A673 (cell line): ENCODE measurements at regions of chr1 and their contacts with region 1.

Region 1: DNA sequence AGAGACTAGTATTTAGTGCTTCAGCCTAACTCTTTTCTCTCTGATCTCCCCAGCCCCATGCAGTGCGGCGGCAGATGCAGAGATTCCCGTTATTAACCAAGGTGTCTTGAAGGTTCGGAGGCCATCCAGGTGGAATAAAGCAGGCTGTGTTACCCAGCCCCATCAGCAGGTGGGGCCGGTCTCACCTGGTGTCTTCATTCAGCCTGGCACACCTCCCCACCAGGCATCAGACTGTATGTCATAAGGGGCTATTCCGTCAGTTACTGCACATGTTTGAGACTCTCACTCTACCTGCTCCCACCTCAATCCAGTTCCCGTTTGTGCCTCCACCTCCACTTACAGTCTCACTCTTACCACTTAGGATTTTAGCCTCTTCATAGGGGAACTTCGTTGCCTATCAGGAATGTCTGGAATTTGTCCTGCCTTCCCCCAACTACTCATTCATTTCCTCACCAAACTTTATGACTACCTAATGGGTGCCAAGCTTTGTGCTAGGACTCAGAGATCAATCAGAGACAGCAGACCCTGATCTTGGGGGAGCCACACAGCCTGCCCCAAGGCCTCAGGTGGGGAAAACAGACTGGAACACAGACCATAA is 170.2 kb downstream of the PLPP3 start:
- DNase-seq: no peak
- H3K4me3 ChIP-seq: no peak overlapping the region
- H3K27ac ChIP-seq: no peak overlapping the region
- H3K4me1 ChIP-seq: no peaks in the 10 kb centered on the region
- H3K27me3 ChIP-seq: peaks cover 5% of the 10 kb centered on the region
- CTCF ChIP-seq: 0 out of 2 replicates have a peak, but pooled peaks have one; percentile 12

Region 2: DNA sequence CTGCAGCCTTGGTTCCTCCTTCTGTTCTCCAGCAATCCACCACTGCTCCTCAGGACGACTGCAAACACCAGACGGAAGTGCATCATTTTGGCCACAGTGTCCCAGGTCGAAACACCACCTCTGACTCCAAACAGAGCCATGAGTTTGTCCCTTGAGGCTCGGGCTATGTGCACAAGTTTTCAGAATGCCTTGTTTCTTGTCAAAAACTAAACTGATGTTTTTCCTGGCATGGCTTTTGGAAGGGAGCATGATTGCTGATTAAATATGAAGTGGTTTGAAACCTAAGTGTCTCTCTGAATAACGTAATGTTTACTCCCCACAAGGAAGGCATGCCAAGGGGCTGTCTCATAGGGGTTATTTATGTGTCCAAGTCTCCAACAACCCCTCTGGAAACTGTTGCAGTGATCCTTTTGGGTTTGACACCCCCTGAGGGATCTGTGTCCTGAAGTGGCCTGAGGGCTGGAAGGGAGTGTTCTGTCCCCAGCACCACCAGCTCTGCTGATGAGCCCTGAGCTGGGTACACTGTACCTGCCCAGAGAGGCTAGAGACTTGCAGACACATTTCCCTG is 37.4 kb after region 1 on chr1:
- CTCF ChIA-PET with region 1: no interaction called
- POLR2A ChIA-PET with region 1: no interaction called
- intact Hi-C with region 1: no loop called
- DNase-seq: no peak
- H3K4me3 ChIP-seq: no peak overlapping the region
- H3K27ac ChIP-seq: no peak overlapping the region
- H3K4me1 ChIP-seq: no peaks in the 10 kb centered on the region
- H3K27me3 ChIP-seq: peaks cover 6% of the 10 kb centered on the region
- CTCF ChIP-seq: no peak

Region 3: GRCh38 chr1:56491441-56491840 is 82.2 kb after region 1 on chr1:
- CTCF ChIA-PET with region 1: no interaction called
- POLR2A ChIA-PET with region 1: no interaction called
- intact Hi-C with region 1: no loop called
- DNase-seq: no peak
- H3K4me3 ChIP-seq: no peak overlapping the region
- H3K27ac ChIP-seq: no peak overlapping the region
- H3K4me1 ChIP-seq: no peaks in the 10 kb centered on the region
- H3K27me3 ChIP-seq: no peaks in the 10 kb centered on the region
- CTCF ChIP-seq: no peak

Region 4: DNA sequence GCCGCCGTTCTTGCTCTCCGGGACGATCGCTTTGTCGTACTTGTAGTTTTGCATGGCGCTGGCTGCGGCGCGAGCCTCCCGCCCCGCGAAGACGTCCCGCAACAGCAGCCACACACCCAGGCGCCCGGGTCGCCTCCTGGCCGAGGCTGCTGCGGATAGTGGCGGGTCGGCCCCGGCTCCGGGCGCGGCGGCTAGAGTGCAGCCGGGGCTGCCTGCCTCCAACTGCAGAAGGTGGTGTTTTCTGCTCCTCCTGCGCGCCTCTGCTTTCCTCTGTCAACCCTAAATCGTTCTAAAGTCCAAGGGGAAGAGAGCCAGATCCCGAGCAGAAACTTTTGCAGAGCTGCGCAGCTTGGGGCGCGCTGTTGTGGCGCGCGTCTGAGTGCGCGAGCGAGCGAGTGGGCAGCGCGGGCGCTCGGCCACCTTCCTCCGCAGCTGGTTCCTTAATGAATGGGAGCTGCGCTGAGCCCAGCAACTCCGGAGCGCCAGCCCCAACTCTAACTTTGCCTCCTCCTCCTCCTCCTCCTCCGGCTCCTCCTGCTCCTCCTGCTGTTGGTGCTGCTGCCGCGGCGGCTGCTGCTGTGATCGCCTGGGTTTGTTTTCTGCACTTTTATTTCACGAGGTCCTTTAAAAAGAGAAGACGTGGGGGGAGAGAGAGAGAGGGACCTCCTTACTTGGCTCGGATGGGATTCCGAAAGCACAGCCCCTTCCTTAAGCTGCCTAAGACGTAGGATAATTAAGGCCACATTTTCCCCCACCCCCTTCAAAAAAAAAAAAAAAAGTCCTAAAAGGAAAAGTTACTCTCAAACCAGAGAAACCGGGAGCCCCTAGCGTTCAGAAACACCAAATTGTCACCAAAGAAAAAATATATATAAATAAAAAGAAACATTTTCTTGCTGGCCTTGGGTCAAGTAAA is 170.0 kb after region 1 on chr1 and contains the start of gene PLPP3:
- CTCF ChIA-PET with region 1: no interaction called
- POLR2A ChIA-PET with region 1: no interaction called
- intact Hi-C with region 1: loop called (anchors 10 kb)
- DNase-seq: peak; percentile 76
- H3K4me3 ChIP-seq: peak within 1 kb of the TSS; percentile 57
- H3K27ac ChIP-seq: peak within 1 kb of the TSS; percentile 10
- H3K4me1 ChIP-seq: peaks cover 5% of the 10 kb centered on the region
- H3K27me3 ChIP-seq: peaks cover 32% of the 10 kb centered on the region
- CTCF ChIP-seq: peak; percentile 58
- total RNA-seq, gene PLPP3: 0.39 and 0.79 TPM in 2 replicates

Region 5: GRCh38 chr1:56696663-56697062 is 287.5 kb after region 1 on chr1:
- CTCF ChIA-PET with region 1: no interaction called
- POLR2A ChIA-PET with region 1: no interaction called
- intact Hi-C with region 1: no loop called
- DNase-seq: no peak
- H3K4me3 ChIP-seq: no peak overlapping the region
- H3K27ac ChIP-seq: no peak overlapping the region
- H3K4me1 ChIP-seq: no peaks in the 10 kb centered on the region
- H3K27me3 ChIP-seq: peaks cover 6% of the 10 kb centered on the region
- CTCF ChIP-seq: no peak

Region 6: DNA sequence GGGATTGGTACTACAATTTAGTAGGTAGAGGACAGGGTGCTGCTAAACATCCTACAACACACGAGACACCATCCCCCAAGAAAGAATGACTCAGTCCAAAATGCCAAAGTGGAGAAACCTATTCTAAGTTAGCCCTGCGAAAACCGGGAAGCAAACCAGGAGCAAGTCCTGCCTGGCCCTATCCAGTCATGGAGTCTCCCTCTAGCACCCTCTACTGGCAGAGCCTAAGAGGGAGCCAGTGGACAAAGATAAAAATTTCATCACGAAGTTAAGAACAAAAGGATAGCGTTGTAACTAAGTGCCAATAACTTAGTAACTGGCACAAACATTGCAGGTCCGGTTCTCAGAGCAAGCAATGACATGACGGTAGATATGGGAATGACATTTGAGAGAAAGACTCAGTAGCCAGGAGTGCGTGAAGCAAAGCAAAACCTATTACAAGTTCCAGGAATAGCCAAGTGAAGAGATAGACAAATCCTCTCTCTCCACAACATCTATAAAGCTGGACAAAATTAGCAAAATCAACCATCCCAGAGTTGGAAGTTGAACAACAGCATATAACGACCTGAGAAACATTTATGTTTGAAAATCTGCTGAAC is 1753.9 kb after region 1 on chr1:
- CTCF ChIA-PET with region 1: no interaction called
- POLR2A ChIA-PET with region 1: no interaction called
- intact Hi-C with region 1: no loop called
- DNase-seq: peak; percentile 87
- H3K4me3 ChIP-seq: no peak overlapping the region
- H3K27ac ChIP-seq: no peak overlapping the region
- H3K4me1 ChIP-seq: peaks cover 17% of the 10 kb centered on the region
- H3K27me3 ChIP-seq: no peaks in the 10 kb centered on the region
- CTCF ChIP-seq: peak; percentile 98